ENCODE measurements at regions of chr10 and their contacts with region 1.

Region 1: DNA sequence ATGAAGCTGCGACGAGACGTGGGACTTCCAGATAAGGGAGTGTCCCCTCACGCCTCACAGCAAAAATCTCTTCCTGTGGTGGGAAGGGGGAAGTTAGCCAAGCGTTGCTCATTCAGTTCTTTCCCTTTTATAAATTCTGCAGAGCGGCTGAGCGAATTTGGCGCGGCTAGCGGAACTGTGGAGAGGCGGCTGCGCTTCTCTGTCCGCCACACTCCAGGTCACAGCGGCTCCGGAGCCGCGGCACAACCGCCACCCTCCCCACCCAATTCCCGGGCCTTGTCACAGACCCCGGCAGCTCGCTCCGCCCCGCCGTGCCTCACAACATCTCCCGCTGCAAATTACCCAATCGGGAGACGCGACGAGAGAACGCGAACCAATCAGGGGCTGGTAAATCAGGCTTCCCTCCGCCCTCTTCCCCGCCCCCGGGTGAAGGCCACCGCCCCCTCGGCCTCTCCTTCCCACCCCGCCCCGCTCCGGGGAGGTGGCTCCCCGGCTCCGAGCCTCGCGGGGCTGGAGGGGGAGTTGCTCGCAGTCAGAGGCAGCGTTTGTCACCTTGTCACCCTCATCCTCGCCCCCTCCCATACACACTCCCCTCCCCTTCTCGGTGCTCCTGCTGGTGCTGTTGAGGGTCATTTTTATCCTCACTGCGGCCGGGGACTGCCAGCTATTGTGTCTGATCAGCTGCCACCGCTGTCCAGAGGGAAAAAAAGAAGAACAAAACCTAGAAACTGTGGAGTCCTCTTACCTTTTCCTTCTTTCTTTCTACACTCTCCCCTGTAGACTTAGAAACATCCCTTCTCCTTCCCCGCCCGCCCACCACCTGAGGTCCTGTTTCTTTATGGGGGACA is 918 bp upstream of the ARHGAP21 start:
- DNase-seq: peak; percentile 99 to 100
- H3K4me3 ChIP-seq: peak overlapping the region; percentile 85
- H3K4me3 Mint-ChIP-seq: no peak overlapping the region
- H3K27ac Mint-ChIP-seq: peak overlapping the region; percentile 86
- H3K4me1 ChIP-seq: peaks cover 8% of the 10 kb centered on the region
- H3K4me1 Mint-ChIP-seq: peaks cover 21% of the 10 kb centered on the region
- H3K27me3 ChIP-seq: no peaks in the 10 kb centered on the region
- H3K27me3 Mint-ChIP-seq: no peaks in the 10 kb centered on the region
- CTCF ChIP-seq: no peak

Region 2: DNA sequence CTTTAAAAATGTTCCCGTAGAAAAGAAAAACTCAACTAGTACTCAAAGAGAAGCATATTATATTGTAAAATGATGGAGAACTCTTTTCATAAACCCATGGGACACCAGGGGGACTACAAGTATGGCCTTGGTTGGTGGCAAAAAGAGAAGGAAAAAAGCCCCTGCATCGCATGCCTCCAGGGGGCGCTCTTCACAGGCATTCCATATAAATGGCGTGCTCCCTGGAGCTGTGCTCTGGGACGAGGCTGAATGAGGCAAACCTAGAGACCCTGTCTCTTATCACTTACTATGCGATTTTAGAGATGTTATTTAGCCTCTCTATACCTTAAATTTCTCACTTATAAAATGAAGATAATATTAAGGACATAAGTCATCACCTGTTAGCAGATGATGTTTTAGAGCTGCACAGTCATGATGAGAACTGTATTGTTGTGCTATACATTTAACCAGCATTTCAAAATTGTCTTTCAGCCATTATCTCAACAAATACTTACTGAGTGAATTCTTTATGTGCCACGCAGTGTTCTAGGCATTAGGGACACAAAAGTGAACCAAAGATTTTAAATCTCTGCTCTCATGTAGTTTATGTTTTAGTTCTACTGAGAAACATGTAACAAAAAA is 106.7 kb before region 1 on chr10:
- CTCF ChIA-PET with region 1: interaction called, 5 read pairs
- POLR2A ChIA-PET with region 1: no interaction called
- intact Hi-C with region 1: loop called (anchors 1 kb)
- DNase-seq: peak; percentile 79 to 87
- H3K4me3 ChIP-seq: no peak overlapping the region
- H3K4me3 Mint-ChIP-seq: peak overlapping the region; percentile 67
- H3K27ac Mint-ChIP-seq: peak overlapping the region; percentile 69
- H3K4me1 ChIP-seq: peaks cover 21% of the 10 kb centered on the region
- H3K4me1 Mint-ChIP-seq: peaks cover 13% of the 10 kb centered on the region
- H3K27me3 ChIP-seq: no peaks in the 10 kb centered on the region
- H3K27me3 Mint-ChIP-seq: no peaks in the 10 kb centered on the region
- CTCF ChIP-seq: peak; percentile 94 to 99

Measured in Caco-2 (cell line).